Right ventricle myocardium inferior (tissue), 1 donor: ENCODE measurements at regions of chr14 and their contacts with region 1.

Region 1: DNA sequence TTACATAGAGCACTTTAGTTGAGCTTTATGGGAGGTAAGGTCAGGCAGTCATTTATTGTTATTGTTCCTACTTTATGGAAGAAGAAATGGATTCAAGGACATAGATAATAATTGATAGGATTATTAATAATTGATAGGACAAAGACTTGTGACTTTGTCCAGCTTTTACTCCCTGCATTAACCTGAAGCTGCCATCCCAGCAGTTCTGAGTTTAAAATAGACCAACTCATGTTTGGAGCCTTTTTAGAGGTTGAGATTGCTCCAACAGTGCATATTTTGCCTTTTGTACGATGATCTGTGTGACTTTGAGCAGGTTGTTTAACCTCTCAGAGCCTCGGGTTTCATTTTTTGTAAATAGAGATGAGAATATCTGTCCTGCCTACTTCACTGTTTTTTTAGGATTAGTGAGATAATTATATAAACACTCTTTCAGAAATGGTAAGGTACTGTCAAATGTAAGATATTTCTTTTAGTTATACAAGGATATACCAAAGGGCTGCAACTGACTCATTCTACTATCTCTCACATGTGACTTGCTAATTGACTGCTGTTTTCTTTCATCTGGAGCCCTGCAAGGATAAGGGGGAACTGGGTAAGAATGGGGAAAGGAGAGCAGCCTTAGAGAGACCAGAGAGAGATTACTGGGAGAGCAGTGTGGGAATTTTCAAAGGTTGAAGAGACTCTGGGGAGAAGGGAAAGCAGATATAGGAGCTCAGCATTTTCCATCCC is 15.3 kb downstream of the WDR20 start:
- DNase-seq: no peak
- ATAC-seq: no peak

Region 2: GRCh38 chr14:102209217-102209966 is 54.4 kb after region 1 on chr14:
- intact Hi-C with region 1: loop called (anchors 5 kb)
- DNase-seq: no peak
- ATAC-seq: peak; percentile 76